Caco-2 (cell line): ENCODE measurements at regions of chr11 and their contacts with region 1.

Region 1: GRCh38 chr11:129427376-129427775 is 51.7 kb downstream of the BARX2 start:
- DNase-seq: peak; percentile 79 to 81
- H3K4me3 ChIP-seq: no peak overlapping the region
- H3K4me3 Mint-ChIP-seq: peak overlapping the region; percentile 32
- H3K27ac Mint-ChIP-seq: peak overlapping the region; percentile 54
- H3K4me1 ChIP-seq: peaks cover 63% of the 10 kb centered on the region
- H3K4me1 Mint-ChIP-seq: peaks cover 50% of the 10 kb centered on the region
- H3K27me3 ChIP-seq: no peaks in the 10 kb centered on the region
- H3K27me3 Mint-ChIP-seq: no peaks in the 10 kb centered on the region
- CTCF ChIP-seq: no peak

Region 2: GRCh38 chr11:129202646-129203045 is 224.7 kb before region 1 on chr11:
- CTCF ChIA-PET with region 1: no interaction called
- POLR2A ChIA-PET with region 1: no interaction called
- intact Hi-C with region 1: no loop called
- DNase-seq: no peak
- H3K4me3 ChIP-seq: no peak overlapping the region
- H3K4me3 Mint-ChIP-seq: no peak overlapping the region
- H3K27ac Mint-ChIP-seq: no peak overlapping the region
- H3K4me1 ChIP-seq: no peaks in the 10 kb centered on the region
- H3K4me1 Mint-ChIP-seq: no peaks in the 10 kb centered on the region
- H3K27me3 ChIP-seq: no peaks in the 10 kb centered on the region
- H3K27me3 Mint-ChIP-seq: no peaks in the 10 kb centered on the region
- CTCF ChIP-seq: no peak

Region 3: DNA sequence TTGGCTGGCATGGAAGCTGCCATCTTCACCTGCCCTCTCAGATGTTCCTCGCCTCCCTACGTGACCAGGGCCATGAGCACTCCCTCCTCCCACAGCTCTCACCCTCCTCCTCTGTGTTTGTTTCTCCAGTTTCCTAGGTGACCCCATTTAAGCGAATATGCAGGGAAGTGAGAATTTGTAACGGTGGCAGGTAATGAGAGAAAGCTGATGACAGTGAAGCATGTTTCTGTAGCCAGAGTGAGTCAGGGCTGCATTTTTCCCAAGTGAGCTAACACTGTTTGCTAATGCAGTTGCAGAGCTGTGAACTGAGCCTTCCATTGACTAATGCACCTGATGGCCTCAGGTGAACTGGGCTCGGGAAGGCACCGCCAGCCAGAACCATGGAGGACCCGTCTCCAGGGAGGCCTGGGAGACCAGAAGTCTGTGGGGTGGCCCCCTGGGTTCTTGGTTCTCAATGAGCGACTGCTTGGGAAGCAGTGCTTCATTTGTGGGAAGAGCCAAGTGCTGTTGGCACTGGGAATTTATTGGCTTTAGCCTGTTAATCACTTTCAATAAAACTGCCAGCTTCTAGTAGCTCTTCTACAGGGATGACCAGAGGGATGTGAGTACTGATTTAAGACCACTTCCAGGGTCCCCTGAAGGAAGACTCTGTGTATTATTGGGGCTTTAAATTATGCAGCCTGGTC is 12.8 kb after region 1 on chr11:
- CTCF ChIA-PET with region 1: interaction called, 5 read pairs
- POLR2A ChIA-PET with region 1: no interaction called
- intact Hi-C with region 1: loop called (anchors 1 kb)
- DNase-seq: peak; percentile 65 to 66
- H3K4me3 ChIP-seq: no peak overlapping the region
- H3K4me3 Mint-ChIP-seq: no peak overlapping the region
- H3K27ac Mint-ChIP-seq: peak overlapping the region; percentile 13
- H3K4me1 ChIP-seq: peaks cover 19% of the 10 kb centered on the region
- H3K4me1 Mint-ChIP-seq: peaks cover 29% of the 10 kb centered on the region
- H3K27me3 ChIP-seq: no peaks in the 10 kb centered on the region
- H3K27me3 Mint-ChIP-seq: no peaks in the 10 kb centered on the region
- CTCF ChIP-seq: no peak

Region 4: DNA sequence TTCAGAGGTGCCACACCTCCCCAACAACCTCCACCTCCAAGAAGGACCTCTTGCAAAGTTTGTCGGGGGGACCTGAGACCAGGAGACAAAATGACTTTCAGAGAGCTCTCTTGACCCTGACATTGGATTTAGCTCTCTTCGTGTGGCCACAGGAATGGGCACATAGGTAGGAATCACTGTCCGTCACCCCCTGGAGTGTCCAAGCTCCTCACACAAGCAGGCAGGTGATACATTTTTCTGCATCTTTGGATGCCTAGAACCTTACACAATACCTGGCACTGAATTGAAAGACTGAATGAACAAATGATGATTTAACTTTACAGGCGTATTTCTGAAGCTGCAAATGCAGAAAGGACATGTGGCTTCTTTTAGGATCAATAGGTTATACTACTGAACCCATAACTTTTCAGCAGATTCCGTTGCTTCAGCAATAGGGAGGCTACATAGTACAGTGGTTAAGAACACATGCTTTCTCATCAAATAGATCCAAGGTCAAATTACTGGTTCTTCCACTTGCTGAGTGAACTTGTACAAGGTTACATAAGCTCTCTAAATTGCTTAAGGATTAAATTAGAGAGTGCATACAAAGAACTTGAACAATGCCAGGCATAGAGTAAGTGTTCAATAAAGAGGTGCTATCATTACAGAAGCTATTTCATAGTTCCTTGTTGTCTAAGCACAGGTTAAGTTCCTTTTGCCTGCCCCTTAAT is 77.7 kb after region 1 on chr11:
- CTCF ChIA-PET with region 1: no interaction called
- POLR2A ChIA-PET with region 1: no interaction called
- intact Hi-C with region 1: loop called (anchors 2 kb)
- DNase-seq: no peak
- H3K4me3 ChIP-seq: no peak overlapping the region
- H3K4me3 Mint-ChIP-seq: no peak overlapping the region
- H3K27ac Mint-ChIP-seq: no peak overlapping the region
- H3K4me1 ChIP-seq: peaks cover 29% of the 10 kb centered on the region
- H3K4me1 Mint-ChIP-seq: peaks cover 31% of the 10 kb centered on the region
- H3K27me3 ChIP-seq: no peaks in the 10 kb centered on the region
- H3K27me3 Mint-ChIP-seq: no peaks in the 10 kb centered on the region
- CTCF ChIP-seq: no peak